GM10248 (cell line): ENCODE measurements at regions of chr17 and their contacts with region 1.

Region 1: DNA sequence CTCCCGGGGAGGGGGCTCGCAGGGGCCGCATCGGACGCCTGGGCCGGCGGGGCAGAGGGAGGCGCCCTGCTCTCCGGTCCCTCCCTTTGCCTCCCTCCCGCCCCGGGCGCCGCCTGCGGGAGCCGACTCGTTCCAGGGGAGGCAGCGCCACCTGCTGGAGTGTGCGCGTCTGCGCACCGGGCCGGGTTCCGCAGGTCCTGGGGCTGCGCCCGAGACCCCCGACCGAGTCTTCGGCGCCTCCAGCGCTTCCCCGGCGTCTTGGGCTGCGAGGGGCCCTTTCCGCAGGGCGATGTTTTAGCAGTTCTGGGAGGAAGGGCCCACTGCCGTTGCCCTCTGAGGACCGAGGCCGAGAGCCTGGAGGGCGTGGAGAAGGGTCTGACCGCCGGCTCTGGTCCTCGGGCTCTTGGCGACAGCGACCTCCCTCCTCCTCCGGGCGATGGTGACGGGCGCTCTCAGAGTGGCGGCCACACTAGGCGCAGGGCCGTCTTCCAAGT is 106.3 kb downstream of the SEC14L1 start:
- DNase-seq: peak; percentile 93
- CTCF ChIP-seq: peak; percentile 94

Region 2: DNA sequence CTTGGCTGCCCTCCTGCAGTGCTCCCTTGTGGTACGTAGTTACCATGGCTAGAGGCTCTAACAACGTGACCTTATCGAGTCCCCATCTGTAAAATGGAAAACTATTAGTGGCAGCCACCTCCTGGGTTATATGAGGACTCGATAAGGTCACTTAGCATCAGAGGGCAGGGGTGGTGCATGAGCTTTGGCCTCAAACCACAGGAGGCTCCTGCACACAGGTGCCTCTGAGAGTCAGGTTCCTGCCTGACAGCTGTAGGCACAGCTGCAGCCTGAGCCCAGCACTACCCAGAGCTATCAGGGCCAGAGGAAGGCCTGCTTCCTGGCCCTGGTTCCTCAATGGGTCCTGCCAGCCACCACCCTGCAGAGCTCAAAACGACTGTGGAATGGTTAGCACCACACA is 163.6 kb before region 1 on chr17:
- CTCF ChIA-PET with region 1: interaction called, 23 read pairs
- POLR2A ChIA-PET with region 1: no interaction called
- DNase-seq: no peak
- CTCF ChIP-seq: no peak